Heart right ventricle (tissue), 16 donors: ENCODE measurements at regions of chr16 and their contacts with region 1.

Region 1: DNA sequence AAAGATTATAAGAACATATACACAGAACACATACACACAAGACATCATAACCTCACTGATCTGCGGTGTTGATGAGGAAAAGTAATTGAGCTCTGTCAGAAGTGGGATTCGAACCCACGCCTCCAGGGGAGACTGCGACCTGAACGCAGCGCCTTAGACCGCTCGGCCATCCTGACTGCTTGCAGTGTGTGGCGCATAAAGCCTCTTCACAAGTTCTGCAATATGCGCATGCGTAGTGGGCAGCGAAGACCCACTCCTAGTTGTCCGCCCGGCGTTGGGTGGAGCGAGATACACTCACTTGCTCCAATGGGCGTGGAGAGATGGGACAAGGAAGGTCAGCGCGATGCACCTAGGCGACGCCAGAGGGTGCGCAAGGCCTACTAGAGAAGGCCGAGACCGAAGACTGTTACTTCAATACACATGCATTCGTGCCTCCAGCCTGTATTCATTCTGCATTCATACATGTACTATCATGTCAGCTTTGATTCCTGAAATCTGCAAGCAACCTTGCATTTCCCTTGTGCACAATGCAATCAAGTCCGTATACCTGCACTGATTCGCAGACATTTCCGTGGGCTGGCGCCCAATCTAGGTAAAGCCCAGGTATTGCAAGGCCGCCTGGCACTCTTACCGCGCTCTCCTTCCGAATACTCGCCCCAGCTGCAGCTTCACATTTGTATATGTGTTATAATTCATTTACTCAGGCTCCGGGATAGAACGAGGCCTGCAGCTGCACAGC is 16.1 kb upstream of the PLLP start:
- DNase-seq: peak; percentile 96 to 99
- ATAC-seq: peak; percentile 91 to 96 (median 94)
- H3K4me3 ChIP-seq: peak overlapping the region; percentile 16 to 60 (median 52)
- H3K27ac ChIP-seq: peak overlapping the region; percentile 51 to 95 (median 88)
- H3K4me1 ChIP-seq: peaks cover 4 to 44% (median 38%) of the 10 kb centered on the region in 9 donors
- H3K27me3 ChIP-seq: no peaks in the 10 kb centered on the region
- CTCF ChIP-seq: peak; percentile 88 to 98 (median 95)

Region 2: DNA sequence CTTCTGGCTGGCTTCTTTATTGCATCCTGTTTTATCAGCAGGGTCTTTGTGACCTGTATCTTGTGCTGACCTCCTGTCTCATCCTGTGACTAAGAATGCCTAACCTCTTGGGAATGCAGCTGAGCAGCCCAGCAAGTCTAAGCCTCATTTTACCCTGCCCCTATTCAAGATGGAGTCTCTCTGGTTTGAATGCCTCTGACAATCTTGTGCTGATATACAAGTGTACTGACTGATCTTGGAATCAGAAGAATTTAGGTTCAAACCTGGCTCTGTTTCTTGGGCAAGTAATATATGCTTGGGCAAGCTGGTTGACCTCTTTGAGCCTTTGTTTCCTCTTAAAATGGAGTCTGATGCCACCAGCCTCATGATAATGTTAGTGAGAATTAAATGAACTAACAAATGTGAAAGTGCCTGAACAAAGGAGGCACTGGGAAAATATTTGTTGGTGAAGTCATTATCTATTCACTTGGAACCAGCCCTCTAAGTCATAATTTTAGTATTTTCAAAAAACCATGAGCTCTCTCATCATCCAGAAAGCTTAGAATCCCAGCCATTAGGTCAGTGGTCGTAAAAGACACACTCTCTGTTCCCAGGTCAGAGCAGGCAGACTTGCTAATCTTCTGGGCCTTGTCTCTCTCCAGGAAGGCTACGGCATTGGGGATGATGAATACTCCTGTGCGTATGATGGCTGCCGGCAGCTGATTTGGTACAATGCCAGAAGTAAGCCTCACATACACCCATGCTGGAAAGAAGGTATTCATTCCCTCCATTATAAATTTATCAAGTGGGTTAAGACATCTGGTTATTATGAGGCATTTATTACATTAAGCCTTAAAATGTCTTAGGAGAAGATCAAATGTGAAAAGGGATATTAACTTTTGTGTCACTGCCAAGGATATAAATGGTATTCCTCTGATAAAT is 73.6 kb before region 1 on chr16:
- intact Hi-C with region 1: no loop called
- DNase-seq: no peak
- ATAC-seq: no peak
- H3K4me3 ChIP-seq: no peak overlapping the region
- H3K27ac ChIP-seq: no peak overlapping the region
- H3K4me1 ChIP-seq: no peaks in the 10 kb centered on the region
- H3K27me3 ChIP-seq: no peaks in the 10 kb centered on the region
- CTCF ChIP-seq: no peak

Region 3: DNA sequence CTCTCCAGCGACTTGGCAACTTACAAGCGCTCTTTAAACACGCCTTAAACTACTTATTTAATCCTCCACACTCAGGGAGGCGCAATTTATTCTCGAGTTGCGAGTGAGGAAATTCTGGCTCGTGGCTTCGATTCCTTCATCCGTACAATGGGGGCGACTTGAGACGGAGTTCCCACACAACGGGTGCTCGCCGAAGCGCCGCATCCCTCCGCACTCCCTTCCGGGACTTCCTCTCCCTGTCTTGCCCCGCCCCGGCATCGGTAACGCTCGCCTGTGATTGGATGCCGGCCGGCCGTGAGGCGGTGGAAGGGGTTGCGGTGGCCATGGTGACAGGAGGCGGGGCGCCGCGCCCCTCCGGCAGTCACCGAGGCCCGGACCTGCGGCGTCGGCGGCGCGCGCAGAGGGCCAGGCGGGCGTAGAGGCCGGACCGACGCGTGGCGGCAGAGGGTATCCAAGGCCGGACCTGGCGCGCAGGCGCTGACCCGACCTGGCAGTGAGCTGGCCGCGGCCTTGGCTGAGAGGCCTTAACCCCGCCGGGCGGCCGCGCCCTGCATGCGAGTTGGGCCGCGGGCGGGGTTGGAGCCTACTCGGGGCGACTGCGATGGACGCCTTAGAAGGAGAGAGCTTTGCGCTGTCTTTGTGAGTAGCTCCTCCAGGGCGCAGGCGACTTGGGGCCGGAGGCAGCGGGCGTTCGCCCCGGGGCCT is 55.6 kb before region 1 on chr16 and contains the start of gene ARL2BP:
- intact Hi-C with region 1: loop called in 8 of 10 experiments (anchors 2 to 10 kb)
- DNase-seq: peak; percentile 97 to 98
- ATAC-seq: peak; percentile 97 to 100 (median 98)
- H3K4me3 ChIP-seq: peak within 1 kb of the TSS; percentile 74 to 97 (median 82)
- H3K27ac ChIP-seq: peak within 1 kb of the TSS; percentile 89 to 97 (median 96)
- H3K4me1 ChIP-seq: peaks cover 0 to 31% (median 12%) of the 10 kb centered on the region in 9 donors
- H3K27me3 ChIP-seq: no peaks in the 10 kb centered on the region
- CTCF ChIP-seq: peak in 5 of 9 donors; percentile 8 to 40 (median 25)
- total RNA-seq, gene ARL2BP: 39.9 to 53.9 (median 45.9) TPM

Region 4: GRCh38 chr16:57401943-57402640 is 101.5 kb after region 1 on chr16:
- intact Hi-C with region 1: no loop called
- DNase-seq: no peak
- ATAC-seq: peak in 1 of 8 donors; percentile 38
- H3K4me3 ChIP-seq: no peak overlapping the region
- H3K27ac ChIP-seq: no peak overlapping the region
- H3K4me1 ChIP-seq: no peaks in the 10 kb centered on the region
- H3K27me3 ChIP-seq: no peaks in the 10 kb centered on the region
- CTCF ChIP-seq: no peak

Region 5: DNA sequence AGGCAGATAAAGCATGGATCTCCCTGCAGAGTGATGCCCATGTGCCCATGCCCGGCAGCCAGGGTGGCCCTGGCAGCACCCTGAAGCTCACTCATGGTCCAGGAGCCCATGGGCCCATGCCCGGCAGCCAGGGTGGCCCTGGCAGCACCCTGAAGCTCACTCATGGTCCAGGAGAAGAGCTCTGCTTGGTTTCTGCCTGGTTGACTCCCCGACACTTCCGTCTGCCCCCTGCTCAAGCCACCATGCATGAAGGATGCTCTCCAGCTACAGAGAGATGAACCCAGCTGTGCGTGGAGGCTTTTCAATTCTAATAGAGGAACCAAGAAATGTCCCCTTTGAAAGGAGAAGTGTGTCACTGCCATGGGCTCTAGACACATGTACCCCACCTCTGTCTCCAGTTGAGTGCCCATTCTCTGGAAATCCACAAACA is 112.8 kb after region 1 on chr16:
- intact Hi-C with region 1: loop called (anchors 1 to 2 kb)
- DNase-seq: no peak
- ATAC-seq: no peak
- H3K4me3 ChIP-seq: no peak overlapping the region
- H3K27ac ChIP-seq: no peak overlapping the region
- H3K4me1 ChIP-seq: peaks cover 11 to 51% (median 41%) of the 10 kb centered on the region in 9 donors
- H3K27me3 ChIP-seq: no peaks in the 10 kb centered on the region
- CTCF ChIP-seq: no peak

Region 6: GRCh38 chr16:57519796-57520360 is 219.3 kb after region 1 on chr16:
- intact Hi-C with region 1: loop called in 9 of 10 experiments (anchors 1 to 10 kb)
- DNase-seq: peak; percentile 79 to 85
- ATAC-seq: peak; percentile 65 to 89 (median 80)
- H3K4me3 ChIP-seq: no peak overlapping the region
- H3K27ac ChIP-seq: no peak overlapping the region
- H3K4me1 ChIP-seq: peaks cover 0 to 19% (median 5%) of the 10 kb centered on the region in 9 donors
- H3K27me3 ChIP-seq: no peaks in the 10 kb centered on the region
- CTCF ChIP-seq: peak; percentile 93 to 99 (median 98)